CD4-positive, alpha-beta memory T cell (primary cell): ENCODE measurements at regions of chr4 and their contacts with region 1.

Region 1: DNA sequence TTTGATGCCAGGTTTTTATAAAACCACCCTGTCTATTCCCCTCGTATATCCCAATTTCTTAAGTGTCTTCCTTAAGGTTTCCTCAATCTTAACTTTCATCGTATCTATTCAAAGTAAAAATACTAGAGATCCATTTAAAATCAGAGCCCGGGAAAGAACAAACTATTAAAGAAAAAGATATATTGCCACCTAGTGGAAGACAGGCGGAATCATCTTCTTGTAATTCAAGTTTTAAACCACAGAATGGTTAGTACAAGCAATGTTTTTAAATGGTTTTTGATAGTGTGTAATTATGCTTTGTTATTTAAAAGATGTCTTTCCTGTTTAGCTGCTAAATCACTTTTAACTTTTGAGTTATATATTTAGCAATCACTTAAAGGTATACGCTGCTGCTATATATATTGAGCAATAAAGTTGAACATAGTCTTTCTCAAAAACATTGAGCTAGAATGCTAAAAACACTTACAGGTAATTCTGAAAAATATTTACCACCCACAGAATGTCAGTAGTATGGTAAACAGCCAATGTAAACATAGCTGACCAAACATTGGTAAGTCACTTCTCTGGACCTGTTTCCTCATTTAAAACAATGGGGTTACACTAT is 18.2 kb downstream of the PRDM8 start:
- DNase-seq: peak in 4 of 5 donors; percentile 48 to 55 (median 51)
- H3K4me3 ChIP-seq: no peak overlapping the region
- H3K4me3 Mint-ChIP-seq: peak overlapping the region in 1 of 8 donors; percentile 4
- H3K27ac ChIP-seq: no peak overlapping the region
- H3K27ac Mint-ChIP-seq: no peak overlapping the region
- H3K4me1 ChIP-seq: no peaks in the 10 kb centered on the region
- H3K4me1 Mint-ChIP-seq: peaks cover 0 to 1% (median 0%) of the 10 kb centered on the region in 4 donors
- H3K27me3 ChIP-seq: peaks cover 9% of the 10 kb centered on the region
- H3K27me3 Mint-ChIP-seq: peaks cover 8% of the 10 kb centered on the region in 2 donors

Region 2: GRCh38 chr4:78951862-78952472 is 1263.6 kb before region 1 on chr4:
- CTCF ChIA-PET with region 1: interaction called, 18 read pairs
- POLR2A ChIA-PET with region 1: no interaction called
- intact Hi-C with region 1: no loop called
- DNase-seq: peak in 4 of 5 donors; percentile 41 to 45 (median 41)
- H3K4me3 ChIP-seq: no peak overlapping the region
- H3K4me3 Mint-ChIP-seq: no peak overlapping the region
- H3K27ac ChIP-seq: no peak overlapping the region
- H3K27ac Mint-ChIP-seq: no peak overlapping the region
- H3K4me1 ChIP-seq: no peaks in the 10 kb centered on the region
- H3K4me1 Mint-ChIP-seq: no peaks in the 10 kb centered on the region
- H3K27me3 ChIP-seq: no peaks in the 10 kb centered on the region
- H3K27me3 Mint-ChIP-seq: peaks cover 12 to 18% of the 10 kb centered on the region in 2 donors

Region 3: GRCh38 chr4:79917246-79917645 is 298.3 kb before region 1 on chr4:
- CTCF ChIA-PET with region 1: interaction called, 9 read pairs
- POLR2A ChIA-PET with region 1: no interaction called
- intact Hi-C with region 1: loop called (anchors 1 kb)
- DNase-seq: peak; percentile 31 to 35 (median 32)
- H3K4me3 ChIP-seq: no peak overlapping the region
- H3K4me3 Mint-ChIP-seq: no peak overlapping the region
- H3K27ac ChIP-seq: no peak overlapping the region
- H3K27ac Mint-ChIP-seq: peak overlapping the region in 1 of 7 donors; percentile 71
- H3K4me1 ChIP-seq: peaks cover 11% of the 10 kb centered on the region
- H3K4me1 Mint-ChIP-seq: peaks cover 5 to 26% (median 13%) of the 10 kb centered on the region in 4 donors
- H3K27me3 ChIP-seq: no peaks in the 10 kb centered on the region
- H3K27me3 Mint-ChIP-seq: no peaks in the 10 kb centered on the region

Region 4: GRCh38 chr4:80138551-80139538 is 76.7 kb before region 1 on chr4:
- CTCF ChIA-PET with region 1: no interaction called
- POLR2A ChIA-PET with region 1: no interaction called
- intact Hi-C with region 1: no loop called
- DNase-seq: peak; percentile 55 to 81 (median 66)
- H3K4me3 ChIP-seq: no peak overlapping the region
- H3K4me3 Mint-ChIP-seq: peak overlapping the region in 7 of 8 donors; percentile 9 to 68 (median 59)
- H3K27ac ChIP-seq: peak overlapping the region; percentile 45
- H3K27ac Mint-ChIP-seq: peak overlapping the region; percentile 84 to 94 (median 93)
- H3K4me1 ChIP-seq: peaks cover 58% of the 10 kb centered on the region
- H3K4me1 Mint-ChIP-seq: peaks cover 33 to 67% (median 43%) of the 10 kb centered on the region in 4 donors
- H3K27me3 ChIP-seq: no peaks in the 10 kb centered on the region
- H3K27me3 Mint-ChIP-seq: no peaks in the 10 kb centered on the region

Region 5: GRCh38 chr4:80202190-80202711 is 13.3 kb before region 1 on chr4:
- CTCF ChIA-PET with region 1: interaction called, 32 read pairs
- POLR2A ChIA-PET with region 1: interaction called, 10 read pairs
- intact Hi-C with region 1: no loop called
- DNase-seq: peak; percentile 72 to 81 (median 77)
- H3K4me3 ChIP-seq: peak overlapping the region; percentile 23 to 77
- H3K4me3 Mint-ChIP-seq: peak overlapping the region; percentile 82 to 94 (median 88)
- H3K27ac ChIP-seq: peak overlapping the region; percentile 82
- H3K27ac Mint-ChIP-seq: peak overlapping the region; percentile 89 to 93 (median 91)
- H3K4me1 ChIP-seq: peaks cover 17% of the 10 kb centered on the region
- H3K4me1 Mint-ChIP-seq: peaks cover 23 to 34% (median 27%) of the 10 kb centered on the region in 4 donors
- H3K27me3 ChIP-seq: no peaks in the 10 kb centered on the region
- H3K27me3 Mint-ChIP-seq: no peaks in the 10 kb centered on the region